ENCODE measurements at regions of chr6 and their contacts with region 1.

Region 1: DNA sequence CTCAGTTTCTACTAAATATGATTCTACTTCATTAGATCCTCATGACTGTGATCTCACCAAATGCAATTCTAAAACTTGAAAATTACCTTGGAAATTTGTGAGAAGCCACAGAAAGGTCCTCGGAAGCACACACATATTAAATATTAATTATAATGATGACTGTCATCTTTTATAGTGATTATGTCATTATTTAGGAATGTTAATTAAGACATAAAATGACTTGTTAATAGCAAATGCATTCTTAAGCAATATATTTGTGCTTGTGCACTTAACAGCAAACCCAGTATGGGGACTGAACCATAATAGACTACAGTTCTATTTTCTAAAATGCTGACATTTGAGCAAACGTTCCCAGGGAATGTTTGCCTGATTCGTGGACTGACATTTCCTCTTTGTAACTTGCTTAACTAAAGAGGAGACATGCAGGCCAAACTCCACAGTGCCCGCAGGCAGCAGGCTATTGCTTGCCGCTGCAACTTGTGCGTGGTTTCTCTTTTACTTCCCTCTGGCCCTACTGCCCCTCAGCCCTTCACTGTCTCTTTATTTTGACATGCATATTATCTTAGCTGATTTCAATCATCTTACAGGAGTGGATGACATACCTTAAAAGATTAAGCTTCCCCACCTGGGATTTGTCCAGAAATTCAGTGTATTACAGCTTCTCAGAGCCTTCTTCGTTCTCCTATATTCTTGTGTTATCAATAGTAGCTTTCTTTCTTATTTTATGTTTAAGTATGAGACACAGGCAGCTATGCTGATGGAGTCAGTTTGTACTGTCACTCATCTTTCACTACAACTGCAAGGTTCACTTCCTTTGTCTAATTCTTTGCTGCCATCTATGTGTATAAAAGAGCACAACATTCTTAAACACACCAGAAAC is 141.5 kb downstream of the GMDS start:
- DNase-seq: peak; percentile 3 to 37
- H3K4me3 ChIP-seq: no peak overlapping the region
- H3K27ac ChIP-seq: no peak overlapping the region
- H3K4me1 ChIP-seq: no peaks in the 10 kb centered on the region
- H3K27me3 ChIP-seq: no peaks in the 10 kb centered on the region
- CTCF ChIP-seq: peak; percentile 67

Region 2: GRCh38 chr6:1604158-1605030 is 499.5 kb before region 1 on chr6:
- CTCF ChIA-PET with region 1: no interaction called
- POLR2A ChIA-PET with region 1: no interaction called
- intact Hi-C with region 1: loop called (anchors 1 kb)
- DNase-seq: peak in 1 of 2 experiments; percentile 67
- H3K4me3 ChIP-seq: peak overlapping the region; percentile 53; the same call in 1 of the 2 replicates
- H3K27ac ChIP-seq: no peak overlapping the region
- H3K4me1 ChIP-seq: no peaks in the 10 kb centered on the region; the same call in 1 of the 2 replicates
- H3K27me3 ChIP-seq: no peaks in the 10 kb centered on the region
- CTCF ChIP-seq: peak; percentile 74

Region 3: GRCh38 chr6:1645470-1646185 is 458.3 kb before region 1 on chr6:
- CTCF ChIA-PET with region 1: no interaction called
- POLR2A ChIA-PET with region 1: no interaction called
- intact Hi-C with region 1: no loop called
- DNase-seq: no peak
- H3K4me3 ChIP-seq: no peak overlapping the region
- H3K27ac ChIP-seq: no peak overlapping the region
- H3K4me1 ChIP-seq: peaks cover 20% of the 10 kb centered on the region
- H3K27me3 ChIP-seq: no peaks in the 10 kb centered on the region
- CTCF ChIP-seq: no peak

Region 4: DNA sequence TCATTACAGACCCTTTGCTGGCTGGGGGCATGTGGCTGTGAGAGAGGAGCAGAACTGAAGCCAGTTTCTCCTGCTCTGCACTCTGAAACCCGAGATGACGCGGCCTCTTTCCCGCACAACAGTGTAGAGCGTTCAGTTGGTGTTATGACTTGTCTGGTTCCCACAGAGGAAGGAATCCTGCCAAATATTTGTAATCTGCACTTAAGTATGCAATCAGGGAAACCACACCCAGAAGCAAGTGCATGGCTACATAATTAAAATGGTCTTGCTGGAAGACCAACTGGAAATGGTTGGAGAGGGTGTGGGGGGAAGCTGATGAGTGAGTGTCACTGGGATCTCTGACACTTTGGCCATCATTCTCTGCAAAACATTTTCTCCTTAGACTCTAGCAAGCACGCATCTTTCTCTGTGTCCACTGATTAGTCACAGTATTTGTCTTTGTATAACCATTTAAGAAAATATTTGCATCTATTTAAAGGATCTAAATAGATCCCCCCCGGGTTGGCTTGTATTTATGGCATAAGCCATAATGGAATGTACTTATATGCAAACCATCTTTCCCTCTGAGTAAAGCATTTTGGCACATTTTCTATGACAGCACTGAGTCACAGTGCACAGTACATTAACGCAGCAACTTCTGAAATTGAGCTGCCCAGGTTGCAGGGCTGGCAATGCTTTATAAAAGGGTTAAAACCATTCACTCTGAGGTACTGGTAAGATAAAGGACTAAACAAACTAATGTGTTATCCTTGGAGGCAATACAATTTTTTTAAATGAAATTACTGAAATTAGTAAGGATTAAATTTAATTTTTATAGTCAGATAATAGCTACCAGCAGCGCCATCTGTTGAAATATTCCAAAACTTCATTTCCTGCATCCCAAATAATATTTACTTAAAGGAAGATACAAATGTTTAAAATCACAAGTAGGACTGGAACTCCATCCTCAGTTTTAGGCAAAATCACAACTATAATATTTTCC is 417.5 kb before region 1 on chr6:
- CTCF ChIA-PET with region 1: interaction called, 5 read pairs
- POLR2A ChIA-PET with region 1: no interaction called
- intact Hi-C with region 1: loop called (anchors 5 kb)
- DNase-seq: peak; percentile 70 to 90
- H3K4me3 ChIP-seq: no peak overlapping the region
- H3K27ac ChIP-seq: peak overlapping the region; percentile 58
- H3K4me1 ChIP-seq: peaks cover 45% of the 10 kb centered on the region
- H3K27me3 ChIP-seq: no peaks in the 10 kb centered on the region
- CTCF ChIP-seq: peak; percentile 61

Region 5: GRCh38 chr6:1817033-1817761 is 286.7 kb before region 1 on chr6:
- CTCF ChIA-PET with region 1: interaction called, 10 read pairs
- POLR2A ChIA-PET with region 1: no interaction called
- intact Hi-C with region 1: no loop called
- DNase-seq: no peak
- H3K4me3 ChIP-seq: no peak overlapping the region
- H3K27ac ChIP-seq: no peak overlapping the region
- H3K4me1 ChIP-seq: no peaks in the 10 kb centered on the region
- H3K27me3 ChIP-seq: no peaks in the 10 kb centered on the region
- CTCF ChIP-seq: no peak

Region 6: GRCh38 chr6:1917626-1918371 is 186.1 kb before region 1 on chr6:
- CTCF ChIA-PET with region 1: no interaction called
- POLR2A ChIA-PET with region 1: no interaction called
- intact Hi-C with region 1: loop called (anchors 5 kb)
- DNase-seq: peak; percentile 91 to 94
- H3K4me3 ChIP-seq: no peak overlapping the region
- H3K27ac ChIP-seq: peak overlapping the region; percentile 89
- H3K4me1 ChIP-seq: peaks cover 30% of the 10 kb centered on the region
- H3K27me3 ChIP-seq: no peaks in the 10 kb centered on the region
- CTCF ChIP-seq: no peak

Region 7: GRCh38 chr6:2353412-2354137 is 249.7 kb after region 1 on chr6:
- CTCF ChIA-PET with region 1: interaction called, 8 read pairs
- POLR2A ChIA-PET with region 1: no interaction called
- intact Hi-C with region 1: loop called (anchors 2 kb)
- DNase-seq: peak; percentile 60 to 62
- H3K4me3 ChIP-seq: no peak overlapping the region
- H3K27ac ChIP-seq: no peak overlapping the region
- H3K4me1 ChIP-seq: peaks cover 6% of the 10 kb centered on the region; the same call in 1 of the 2 replicates
- H3K27me3 ChIP-seq: no peaks in the 10 kb centered on the region
- CTCF ChIP-seq: peak; percentile 79

Region 8: GRCh38 chr6:2634139-2634964 is 530.5 kb after region 1 on chr6:
- CTCF ChIA-PET with region 1: no interaction called
- POLR2A ChIA-PET with region 1: no interaction called
- intact Hi-C with region 1: loop called (anchors 5 kb)
- DNase-seq: peak; percentile 37 to 83
- H3K4me3 ChIP-seq: peak overlapping the region; percentile 33; the same call in 1 of the 2 replicates
- H3K27ac ChIP-seq: no peak overlapping the region
- H3K4me1 ChIP-seq: peaks cover 25% of the 10 kb centered on the region
- H3K27me3 ChIP-seq: no peaks in the 10 kb centered on the region
- CTCF ChIP-seq: peak; percentile 90